ENCODE measurements at regions of chr1 and their contacts with region 1.

Region 1: DNA sequence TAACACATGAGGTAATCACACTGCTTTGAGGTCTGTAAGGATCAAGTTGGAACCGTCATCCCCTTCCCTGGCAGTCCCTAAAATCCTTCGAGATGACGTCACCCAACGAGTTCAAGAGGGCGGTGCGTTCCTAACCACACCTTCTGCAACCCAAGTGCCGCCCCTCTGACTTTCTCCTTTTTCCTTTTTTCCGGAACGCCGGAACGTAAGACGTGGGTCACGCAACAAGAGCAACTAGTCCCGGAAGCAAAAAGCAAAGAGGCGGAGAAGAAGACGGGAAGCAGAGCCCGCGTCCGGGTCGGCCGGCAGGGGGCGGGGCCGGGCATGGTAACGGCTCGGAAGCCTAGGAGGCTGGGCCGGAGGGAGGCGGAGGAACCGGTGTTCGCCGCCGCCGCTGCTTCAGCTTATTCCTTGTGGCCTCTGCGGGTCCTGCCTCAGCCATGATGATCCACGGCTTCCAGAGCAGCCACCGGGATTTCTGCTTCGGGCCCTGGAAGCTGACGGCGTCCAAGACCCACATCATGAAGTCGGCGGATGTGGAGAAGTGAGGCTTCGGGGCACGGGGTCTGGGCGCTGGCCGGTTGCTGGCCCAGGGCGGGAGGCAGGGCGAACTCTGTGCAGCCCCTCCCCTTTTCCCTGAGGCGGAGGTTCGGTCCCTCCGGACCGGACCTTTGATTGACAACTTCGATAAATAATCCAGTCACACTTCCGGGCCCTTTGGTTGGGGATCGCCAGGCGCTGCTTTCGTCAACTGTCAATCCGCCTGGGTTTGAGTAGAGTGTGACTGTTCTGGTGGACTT is at the start of gene TIPRL:
- DNase-seq: peak; percentile 95
- H3K4me3 ChIP-seq: peak within 1 kb of the TSS; percentile 82
- H3K27ac ChIP-seq: peak within 1 kb of the TSS; percentile 76
- H3K4me1 ChIP-seq: peaks cover 20% of the 10 kb centered on the region
- CTCF ChIP-seq: peak; percentile 51; the same call in 1 of the 2 replicates
- total RNA-seq, gene TIPRL: 36.0 and 37.8 TPM in 2 replicates

Region 2: GRCh38 chr1:168136709-168137514 is 41.9 kb before region 1 on chr1 and contains the start of gene GPR161:
- CTCF ChIA-PET with region 1: no interaction called
- POLR2A ChIA-PET with region 1: no interaction called
- intact Hi-C with region 1: no loop called
- DNase-seq: no peak
- H3K4me3 ChIP-seq: peak within 1 kb of the TSS; percentile 32
- H3K27ac ChIP-seq: no peak within 1 kb of the TSS
- H3K4me1 ChIP-seq: no peaks in the 10 kb centered on the region
- CTCF ChIP-seq: no peak
- total RNA-seq, gene GPR161: not detected in 2 replicates

Region 3: DNA sequence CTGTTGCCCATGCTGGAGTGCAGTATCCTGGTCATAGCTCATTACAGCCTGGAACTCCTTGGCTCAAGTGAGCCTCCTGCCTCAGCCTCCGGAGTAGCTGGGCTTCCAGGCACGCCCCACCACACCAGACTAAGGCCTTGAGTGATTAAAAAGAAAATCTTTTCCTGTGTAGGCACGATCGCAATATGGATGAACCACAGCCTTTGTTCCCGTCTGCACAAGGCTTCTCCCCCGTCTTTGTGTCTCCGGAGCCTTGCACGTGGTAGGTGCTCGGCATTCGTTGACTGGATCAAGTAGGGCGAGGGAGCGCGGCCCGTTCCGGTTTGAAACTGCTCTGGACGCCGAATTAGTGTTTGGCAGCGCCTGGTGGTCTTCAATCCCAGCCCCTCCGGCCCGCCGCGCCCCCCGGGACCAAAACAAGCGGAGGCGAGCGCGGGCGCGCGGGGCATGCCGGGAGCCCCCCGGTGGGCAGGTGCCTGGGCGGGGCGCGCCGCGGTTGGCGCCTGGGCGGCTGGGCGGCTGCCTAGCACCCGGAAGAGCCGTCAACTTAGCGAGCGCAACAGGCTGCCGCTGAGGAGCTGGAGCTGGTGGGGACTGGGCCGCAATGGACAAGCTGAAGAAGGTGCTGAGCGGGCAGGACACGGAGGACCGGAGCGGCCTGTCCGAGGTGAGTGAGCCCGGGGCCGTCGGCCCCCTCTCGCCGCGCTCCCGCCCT is 46.8 kb after region 1 on chr1 and contains the start of gene SFT2D2:
- CTCF ChIA-PET with region 1: interaction called, 3 read pairs
- POLR2A ChIA-PET with region 1: interaction called, 9 read pairs
- intact Hi-C with region 1: loop called (anchors 2 kb)
- DNase-seq: peak; percentile 88
- H3K4me3 ChIP-seq: peak within 1 kb of the TSS; percentile 95
- H3K27ac ChIP-seq: peak within 1 kb of the TSS; percentile 47
- H3K4me1 ChIP-seq: peaks cover 42% of the 10 kb centered on the region
- CTCF ChIP-seq: no peak
- total RNA-seq, gene SFT2D2: 20.7 and 22.3 TPM in 2 replicates